ENCODE measurements at regions of chr1 and their contacts with region 1.

Region 1: DNA sequence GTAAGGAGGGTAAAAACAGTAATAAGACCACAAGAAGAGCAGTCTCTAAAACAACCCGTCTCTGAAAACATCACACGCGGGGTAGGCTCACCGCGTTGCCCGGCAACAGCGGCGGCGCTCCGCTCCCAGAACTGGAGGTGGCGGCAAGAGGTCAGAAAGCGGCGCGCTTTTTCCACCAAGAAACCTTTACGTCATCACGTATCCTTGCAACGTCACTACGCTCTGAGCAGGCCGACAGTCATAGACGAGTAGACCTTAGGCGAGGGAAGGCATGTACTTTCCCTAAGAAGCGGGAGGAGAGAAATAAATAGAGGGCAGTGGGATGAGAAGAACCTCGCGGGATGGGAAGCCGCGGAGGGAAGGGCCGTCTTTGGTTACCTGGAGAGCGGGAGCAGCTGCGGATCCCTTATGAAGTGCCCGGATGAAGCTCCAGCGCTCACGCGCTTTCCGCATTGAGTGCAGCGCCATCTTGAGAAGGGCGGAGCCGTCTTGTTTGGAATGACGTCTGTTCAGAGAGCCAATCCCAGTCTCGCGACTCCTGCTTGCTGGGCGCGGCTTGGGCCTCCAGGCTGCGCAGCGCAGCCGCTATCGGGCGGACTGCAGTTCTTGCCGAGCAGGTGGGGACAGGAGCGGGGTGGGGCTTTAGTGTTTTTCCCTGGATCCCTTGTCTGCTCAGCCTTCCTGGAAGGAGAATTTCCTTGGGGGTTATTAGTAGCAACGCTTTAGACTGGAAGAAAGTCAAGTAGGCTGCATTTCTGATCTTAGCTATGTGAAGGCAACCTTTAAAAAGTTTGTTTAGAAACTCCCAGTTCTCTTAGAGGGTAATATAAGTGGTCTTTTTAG is at the start of gene WARS2:
- DNase-seq: peak; percentile 96 to 97
- ATAC-seq: peak; percentile 100
- H3K4me3 ChIP-seq: peak within 1 kb of the TSS; percentile 38 to 82
- H3K27ac ChIP-seq: peak within 1 kb of the TSS in 1 of 2 donors; percentile 98
- H3K4me1 ChIP-seq: peaks cover 0 to 2% of the 10 kb centered on the region in 2 donors
- H3K27me3 ChIP-seq: no peaks in the 10 kb centered on the region
- total RNA-seq, gene WARS2: 10.4 to 11.5 TPM

Region 2: GRCh38 chr1:119080586-119080985 is 59.8 kb before region 1 on chr1:
- intact Hi-C with region 1: loop called in 1 of 2 experiments (anchors 10 kb)
- DNase-seq: peak in 1 of 2 donors; percentile 54
- ATAC-seq: peak; percentile 49
- H3K4me3 ChIP-seq: no peak overlapping the region
- H3K27ac ChIP-seq: peak overlapping the region; percentile 50 to 71
- H3K4me1 ChIP-seq: peaks cover 0 to 6% of the 10 kb centered on the region in 2 donors
- H3K27me3 ChIP-seq: no peaks in the 10 kb centered on the region

Measured in aorta (tissue), 5 donors.